HEK293 (cell line): ENCODE measurements at regions of chr17 and their contacts with region 1.

Region 1: DNA sequence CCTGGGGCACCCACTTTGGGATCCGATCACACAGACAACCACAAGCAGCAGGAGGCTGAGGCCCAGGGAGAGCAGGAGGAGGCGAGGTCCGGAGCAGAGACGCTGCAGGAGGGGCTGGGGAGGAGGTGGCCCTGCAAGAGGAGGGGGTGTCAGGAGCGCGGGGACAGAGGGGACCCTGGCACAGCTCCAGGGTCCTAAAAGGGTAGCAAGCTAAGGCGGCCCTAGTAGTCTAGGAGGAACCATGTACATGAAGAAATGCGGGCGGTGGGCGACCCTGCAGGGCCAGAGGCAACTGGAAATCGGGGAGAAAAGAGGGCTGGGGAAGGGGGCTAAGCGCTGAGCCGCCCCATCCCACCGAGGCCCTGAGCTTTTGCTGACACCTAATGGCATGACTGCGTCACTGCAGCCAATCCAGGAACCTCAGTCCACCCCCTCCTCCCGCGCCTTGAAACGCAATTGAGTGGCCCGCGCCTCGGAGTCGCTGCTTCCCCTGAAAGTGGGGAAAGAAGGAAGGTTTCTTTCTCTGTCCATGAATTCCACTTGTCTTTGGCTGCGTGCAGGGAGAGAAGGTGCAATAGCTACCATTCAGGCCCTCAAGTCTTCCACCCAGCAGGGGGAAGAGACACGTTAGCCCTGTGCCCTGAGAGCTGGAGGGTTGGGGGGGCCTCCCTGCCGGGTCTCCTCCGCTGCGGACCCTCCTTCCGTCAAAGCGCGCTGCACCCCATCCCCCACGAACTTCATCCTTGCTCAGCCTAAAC is 1.8 kb downstream of the ASGR1 start:
- H3K4me3 ChIP-seq: peak overlapping the region; percentile 54
- H3K27ac ChIP-seq: peak overlapping the region; percentile 39; the same call in 1 of the 2 replicates
- H3K4me1 ChIP-seq: peaks cover 8% of the 10 kb centered on the region
- CTCF ChIP-seq: peak; percentile 88

Region 2: DNA sequence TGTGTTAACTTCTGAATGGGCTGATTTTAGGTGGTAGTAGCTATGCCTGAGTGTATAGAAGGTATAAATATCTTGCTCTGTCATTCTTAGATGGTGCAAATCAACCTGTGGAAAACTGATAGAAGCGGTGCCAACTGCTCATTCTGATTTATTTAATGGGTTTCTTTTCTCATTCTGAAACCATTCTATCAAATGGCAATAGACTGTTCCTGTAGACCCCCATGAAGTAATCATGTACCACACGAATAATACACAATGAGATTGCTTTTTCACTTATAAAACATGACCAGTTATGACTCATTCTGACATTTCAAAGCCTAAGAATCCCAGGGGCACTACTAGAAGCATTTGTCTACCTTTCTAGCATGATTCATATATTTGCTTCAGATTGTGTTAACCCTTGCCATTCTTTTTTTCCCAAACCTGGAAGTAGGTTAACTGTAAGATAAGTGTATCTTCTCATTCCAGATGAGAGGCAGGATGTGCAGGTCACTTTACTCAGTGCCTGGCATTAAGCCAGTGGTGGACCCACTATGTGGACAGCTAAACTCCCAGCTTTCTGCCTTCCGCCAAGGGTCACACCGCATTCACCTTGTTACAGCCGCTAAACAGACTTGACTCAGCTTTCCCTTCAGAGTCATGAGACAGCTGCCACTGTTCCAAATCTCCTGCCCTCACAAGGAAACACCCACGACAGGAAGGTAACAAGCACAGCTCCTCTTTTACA is 117.0 kb before region 1 on chr17:
- CTCF ChIA-PET with region 1: interaction called, 14 read pairs
- POLR2A ChIA-PET with region 1: no interaction called
- H3K4me3 ChIP-seq: no peak overlapping the region
- H3K27ac ChIP-seq: no peak overlapping the region
- H3K4me1 ChIP-seq: 0 out of 2 replicates have a peak, but pooled peaks cover 5% of the 10 kb centered on the region
- CTCF ChIP-seq: no peak

Region 3: DNA sequence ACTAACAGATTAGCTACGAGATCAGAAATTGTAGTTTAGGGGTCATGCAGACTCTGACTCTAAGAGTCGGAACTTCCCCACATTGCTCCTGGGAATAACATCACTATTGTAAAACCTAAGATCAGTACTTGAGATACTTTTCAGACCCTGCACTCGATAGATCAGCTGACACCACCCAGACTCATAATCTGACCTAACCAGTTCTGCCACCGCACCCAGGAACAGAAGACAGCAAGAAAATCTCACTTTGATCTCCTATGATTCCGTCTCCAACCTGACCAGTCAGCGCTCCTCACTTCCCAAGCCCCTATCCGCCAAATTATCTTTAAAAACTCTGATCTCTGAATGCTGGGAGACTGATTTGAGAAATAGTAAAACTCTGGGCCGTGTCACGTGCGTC is 35.6 kb before region 1 on chr17:
- CTCF ChIA-PET with region 1: interaction called, 15 read pairs
- POLR2A ChIA-PET with region 1: no interaction called
- H3K4me3 ChIP-seq: no peak overlapping the region
- H3K27ac ChIP-seq: no peak overlapping the region
- H3K4me1 ChIP-seq: no peaks in the 10 kb centered on the region; the same call in 1 of the 2 replicates
- CTCF ChIP-seq: no peak

Region 4: GRCh38 chr17:7214300-7215135 is 37.1 kb after region 1 on chr17:
- CTCF ChIA-PET with region 1: interaction called, 12 read pairs
- POLR2A ChIA-PET with region 1: interaction called, 13 read pairs
- H3K4me3 ChIP-seq: peak overlapping the region; percentile 36
- H3K27ac ChIP-seq: no peak overlapping the region
- H3K4me1 ChIP-seq: peaks cover 11% of the 10 kb centered on the region
- CTCF ChIP-seq: peak; percentile 91

Region 5: DNA sequence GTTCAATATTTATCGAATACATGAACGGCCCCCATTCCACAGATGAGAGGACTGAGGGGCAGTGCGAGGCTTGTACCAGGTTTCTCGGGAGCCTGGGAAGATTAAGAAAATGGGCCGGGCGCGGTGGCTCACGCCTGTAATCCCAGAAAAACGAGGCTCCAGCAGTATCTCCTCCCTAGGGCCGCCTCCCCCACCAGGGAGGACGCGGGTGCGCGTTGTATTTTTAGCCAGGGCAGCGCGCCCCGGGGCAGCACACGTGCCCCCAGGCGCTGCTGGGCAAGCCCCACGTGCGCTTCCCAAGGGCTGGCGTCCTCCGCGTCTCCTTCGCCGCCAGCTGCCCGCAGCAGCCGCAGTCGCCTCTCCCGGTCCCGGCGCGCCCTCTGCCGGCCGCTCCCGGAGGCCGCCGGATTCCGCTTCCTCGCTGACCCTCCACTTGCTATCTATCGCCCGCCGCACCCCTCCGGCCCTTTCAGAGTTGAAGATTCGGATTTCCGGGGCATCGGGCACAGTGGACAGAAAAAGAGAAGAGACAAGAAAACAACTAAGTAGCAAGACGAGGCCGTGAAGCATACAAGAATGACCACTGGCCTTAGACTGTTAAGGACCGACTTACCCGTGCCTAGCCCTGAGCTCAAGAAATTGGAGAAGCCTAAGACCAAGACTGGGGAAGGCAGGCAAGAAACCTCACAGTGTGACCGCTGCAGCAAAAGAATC is 119.0 kb after region 1 on chr17:
- CTCF ChIA-PET with region 1: interaction called, 11 read pairs
- POLR2A ChIA-PET with region 1: interaction called, 3 read pairs
- H3K4me3 ChIP-seq: no peak overlapping the region
- H3K27ac ChIP-seq: no peak overlapping the region
- H3K4me1 ChIP-seq: peaks cover 6% of the 10 kb centered on the region; the same call in 1 of the 2 replicates
- CTCF ChIP-seq: peak; percentile 96